ENCODE measurements at regions of chr1 and their contacts with region 1.

Region 1: GRCh38 chr1:147808025-147808424 is 47.6 kb upstream of the GJA5 start:
- DNase-seq: peak; percentile 63 to 74
- H3K4me3 ChIP-seq: no peak overlapping the region
- H3K4me3 Mint-ChIP-seq: no peak overlapping the region
- H3K27ac Mint-ChIP-seq: peak overlapping the region; percentile 26
- H3K4me1 ChIP-seq: peaks cover 26% of the 10 kb centered on the region
- H3K4me1 Mint-ChIP-seq: peaks cover 21% of the 10 kb centered on the region
- H3K27me3 ChIP-seq: no peaks in the 10 kb centered on the region
- H3K27me3 Mint-ChIP-seq: no peaks in the 10 kb centered on the region
- CTCF ChIP-seq: no peak

Region 2: GRCh38 chr1:147723691-147724323 is 84.2 kb before region 1 on chr1:
- CTCF ChIA-PET with region 1: no interaction called
- POLR2A ChIA-PET with region 1: no interaction called
- intact Hi-C with region 1: loop called (anchors 5 kb)
- DNase-seq: peak; percentile 70 to 74
- H3K4me3 ChIP-seq: no peak overlapping the region
- H3K4me3 Mint-ChIP-seq: no peak overlapping the region
- H3K27ac Mint-ChIP-seq: no peak overlapping the region
- H3K4me1 ChIP-seq: peaks cover 26% of the 10 kb centered on the region
- H3K4me1 Mint-ChIP-seq: peaks cover 21% of the 10 kb centered on the region
- H3K27me3 ChIP-seq: no peaks in the 10 kb centered on the region
- H3K27me3 Mint-ChIP-seq: no peaks in the 10 kb centered on the region
- CTCF ChIP-seq: peak; percentile 70 to 85

Region 3: DNA sequence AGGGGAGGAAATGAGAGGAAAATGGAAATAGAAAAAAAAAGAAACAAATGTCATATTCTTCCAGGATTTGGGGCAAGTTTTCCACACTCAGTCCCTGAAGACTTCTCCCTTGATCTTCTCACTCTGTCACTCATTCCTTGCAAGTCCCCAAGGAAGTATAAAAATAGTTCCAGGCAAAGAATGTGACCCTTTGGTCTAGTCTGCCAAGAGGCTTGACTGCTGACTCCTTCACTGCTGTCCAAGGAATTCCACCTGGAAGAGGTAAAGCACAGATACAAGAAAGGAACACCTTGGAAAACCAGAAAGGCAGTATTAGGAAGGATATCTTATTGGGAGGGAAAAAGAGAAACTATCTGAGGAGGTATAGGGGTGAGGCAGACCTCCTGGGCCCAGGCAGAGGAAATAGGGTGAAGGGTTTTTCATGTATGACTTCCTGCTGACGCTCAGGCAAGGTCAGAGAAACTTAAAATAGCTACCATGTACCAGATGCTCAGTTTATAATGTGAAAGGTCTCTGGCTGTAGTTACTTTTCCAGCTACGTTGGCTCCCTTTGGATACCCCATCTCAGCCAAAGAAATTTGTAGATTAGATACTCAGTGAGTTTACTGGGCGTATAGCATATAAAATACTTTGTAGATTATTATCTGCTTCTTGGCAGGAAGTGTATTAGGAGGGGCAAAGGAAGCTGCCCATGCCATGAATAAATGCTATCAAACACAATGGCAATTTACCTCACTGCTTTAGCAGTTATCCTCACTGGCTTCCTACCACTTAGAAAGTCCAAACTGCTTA is 45.6 kb before region 1 on chr1:
- CTCF ChIA-PET with region 1: no interaction called
- POLR2A ChIA-PET with region 1: no interaction called
- intact Hi-C with region 1: loop called (anchors 5 kb)
- DNase-seq: peak; percentile 19 to 42
- H3K4me3 ChIP-seq: no peak overlapping the region
- H3K4me3 Mint-ChIP-seq: no peak overlapping the region
- H3K27ac Mint-ChIP-seq: no peak overlapping the region
- H3K4me1 ChIP-seq: peaks cover 31% of the 10 kb centered on the region
- H3K4me1 Mint-ChIP-seq: peaks cover 17% of the 10 kb centered on the region
- H3K27me3 ChIP-seq: no peaks in the 10 kb centered on the region
- H3K27me3 Mint-ChIP-seq: no peaks in the 10 kb centered on the region
- CTCF ChIP-seq: no peak